ENCODE measurements at regions of chr2 and their contacts with region 1.

Region 1: GRCh38 chr2:234951664-234952269 is at the start of gene SH3BP4:
- DNase-seq: peak; percentile 70 to 97 (median 75)

Region 2: GRCh38 chr2:234911271-234911670 is 40.5 kb before region 1 on chr2:
- intact Hi-C with region 1: loop called (anchors 5 kb)
- DNase-seq: peak in 1 of 10 donors; percentile 24

Region 3: GRCh38 chr2:235050992-235051351 is 99.2 kb after region 1 on chr2:
- intact Hi-C with region 1: loop called (anchors 5 kb)
- DNase-seq: peak; percentile 58 to 97 (median 88)

Region 4: GRCh38 chr2:235347691-235348090 is 395.9 kb after region 1 on chr2:
- intact Hi-C with region 1: no loop called
- DNase-seq: no peak